OCI-LY7 (cell line): ENCODE measurements at regions of chr5 and their contacts with region 1.

Region 1: DNA sequence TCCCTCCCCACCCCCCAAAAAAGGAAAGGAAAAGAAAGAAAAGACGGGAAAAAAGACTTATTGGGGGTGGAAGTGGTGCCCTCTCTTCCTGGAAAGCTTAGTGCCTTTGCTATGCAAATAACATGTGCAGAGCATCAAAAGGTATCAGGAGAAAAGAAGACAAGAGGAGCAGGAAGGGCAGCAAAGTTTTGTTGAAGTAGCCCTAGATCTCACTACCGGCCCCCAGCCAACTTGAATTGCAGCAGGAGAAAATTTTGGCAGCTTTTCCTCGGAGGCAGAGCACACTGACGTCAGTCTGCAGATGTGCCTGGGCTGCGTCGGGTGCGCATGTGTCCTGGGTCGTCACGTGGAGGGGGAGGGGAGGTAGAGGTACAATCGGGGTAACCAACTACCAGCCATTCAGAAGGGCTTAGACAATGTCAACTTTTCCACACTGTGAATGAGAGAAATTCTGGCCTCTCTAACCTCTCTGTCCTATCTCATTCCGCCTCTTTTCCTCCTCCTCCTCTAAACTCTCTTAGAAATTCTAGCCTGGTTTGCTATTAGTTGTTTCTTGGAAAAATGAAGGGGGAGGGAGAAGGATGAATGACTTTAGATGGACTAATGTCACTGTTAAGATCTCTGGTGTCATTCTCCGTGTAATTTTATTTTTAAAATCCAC is at the start of gene ADAMTS6:
- DNase-seq: peak; percentile 90
- H3K4me3 ChIP-seq: peak within 1 kb of the TSS; percentile 71
- H3K27ac ChIP-seq: peak within 1 kb of the TSS; percentile 72
- H3K4me1 ChIP-seq: peaks cover 36% of the 10 kb centered on the region
- CTCF ChIP-seq: no peak
- total RNA-seq, gene ADAMTS6: 18.1 and 23.0 TPM in 2 replicates

Region 2: DNA sequence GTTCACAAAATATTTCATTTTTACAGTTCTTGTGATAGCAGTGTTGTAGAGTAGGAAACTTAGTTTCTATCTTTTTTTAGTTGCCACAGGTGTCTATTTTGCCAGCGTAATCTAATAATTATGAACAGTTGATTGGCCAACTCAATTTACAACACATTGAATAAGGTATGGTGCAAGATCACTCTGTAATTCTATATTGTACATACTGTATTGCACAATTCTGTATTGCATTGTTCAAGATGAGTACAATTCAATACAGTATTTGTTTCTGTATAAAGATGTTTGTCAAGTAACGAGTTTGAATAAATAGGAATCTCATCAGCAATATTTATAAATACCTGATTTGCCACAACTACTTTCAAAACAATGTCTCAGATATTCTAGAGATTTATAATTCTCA is 1455.3 kb before region 1 on chr5:
- CTCF ChIA-PET with region 1: no interaction called
- POLR2A ChIA-PET with region 1: no interaction called
- intact Hi-C with region 1: no loop called
- DNase-seq: no peak
- H3K4me3 ChIP-seq: no peak overlapping the region
- H3K27ac ChIP-seq: no peak overlapping the region
- H3K4me1 ChIP-seq: no peaks in the 10 kb centered on the region
- CTCF ChIP-seq: no peak

Region 3: DNA sequence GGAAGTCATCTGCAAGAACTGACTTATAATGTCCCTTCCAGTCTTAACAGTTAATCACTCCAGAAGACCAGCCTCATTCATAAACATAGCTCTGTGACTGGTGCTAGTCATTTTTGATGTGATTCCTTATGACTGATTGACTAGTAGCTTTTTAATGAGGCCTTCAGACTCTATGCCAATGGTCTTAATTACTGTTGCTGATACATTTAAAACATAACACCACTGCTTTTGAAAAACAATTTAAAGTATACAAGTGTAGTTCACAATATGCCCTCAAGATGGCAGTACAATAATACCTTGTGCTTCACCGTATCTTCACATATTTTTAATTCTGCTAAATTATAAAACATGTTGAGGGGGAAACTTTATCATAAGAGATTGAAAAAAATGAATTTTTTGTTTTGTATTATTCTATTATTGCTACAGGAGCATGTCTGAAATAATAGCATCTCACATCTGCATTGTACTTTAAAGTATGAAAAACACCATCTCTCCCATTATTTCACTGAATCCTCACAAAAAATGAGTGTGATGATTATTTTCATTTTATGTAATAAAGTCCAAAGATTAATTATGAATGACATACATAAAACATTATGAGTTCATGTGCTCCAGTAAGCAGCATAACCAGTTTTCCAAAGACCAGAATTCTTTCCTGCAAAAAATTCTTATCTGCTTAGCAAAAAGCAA is 846.6 kb before region 1 on chr5:
- CTCF ChIA-PET with region 1: no interaction called
- POLR2A ChIA-PET with region 1: interaction called, 3 read pairs
- intact Hi-C with region 1: loop called (anchors 2 kb)
- DNase-seq: peak; percentile 47
- H3K4me3 ChIP-seq: no peak overlapping the region
- H3K27ac ChIP-seq: no peak overlapping the region
- H3K4me1 ChIP-seq: no peaks in the 10 kb centered on the region
- CTCF ChIP-seq: peak; percentile 99

Region 4: GRCh38 chr5:64811050-64811640 is 670.6 kb before region 1 on chr5:
- CTCF ChIA-PET with region 1: no interaction called
- POLR2A ChIA-PET with region 1: interaction called, 9 read pairs
- intact Hi-C with region 1: loop called (anchors 1 kb)
- DNase-seq: peak; percentile 65
- H3K4me3 ChIP-seq: no peak overlapping the region
- H3K27ac ChIP-seq: no peak overlapping the region
- H3K4me1 ChIP-seq: no peaks in the 10 kb centered on the region
- CTCF ChIP-seq: peak; percentile 92

Region 5: GRCh38 chr5:64971513-64971912 is 510.3 kb before region 1 on chr5:
- CTCF ChIA-PET with region 1: no interaction called
- POLR2A ChIA-PET with region 1: no interaction called
- intact Hi-C with region 1: loop called (anchors 5 kb)
- DNase-seq: peak; percentile 54
- H3K4me3 ChIP-seq: no peak overlapping the region
- H3K27ac ChIP-seq: no peak overlapping the region
- H3K4me1 ChIP-seq: peaks cover 5% of the 10 kb centered on the region
- CTCF ChIP-seq: peak; percentile 75

Region 6: DNA sequence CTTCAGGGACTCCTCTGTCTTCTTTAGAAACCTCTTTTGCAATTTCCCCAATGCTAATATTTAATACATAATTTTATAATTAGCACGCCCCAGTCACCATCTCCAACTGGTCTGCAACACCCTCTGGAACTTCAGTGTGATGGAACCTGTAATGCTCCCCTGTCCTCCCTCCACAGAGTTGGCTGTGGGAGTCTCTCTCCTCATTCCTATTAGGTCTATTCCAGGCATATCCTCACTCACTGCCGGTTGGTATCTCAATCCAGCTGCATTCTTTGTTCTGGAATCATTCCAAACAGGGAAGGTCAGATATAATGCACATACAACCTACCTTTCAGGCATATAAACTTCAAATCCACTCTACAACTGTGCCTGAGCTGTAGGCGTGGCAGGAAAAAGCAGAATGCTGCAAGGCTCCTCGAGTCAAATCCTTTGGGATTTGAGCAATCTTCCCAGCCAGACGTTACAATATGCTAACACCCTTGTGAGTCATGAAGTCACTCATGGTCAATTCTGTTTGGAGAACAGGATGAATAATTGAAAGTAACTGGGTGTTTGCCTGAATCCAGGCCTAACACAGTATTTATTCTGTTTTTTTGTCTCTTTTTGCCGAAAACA is 419.2 kb before region 1 on chr5:
- CTCF ChIA-PET with region 1: interaction called, 3 read pairs
- POLR2A ChIA-PET with region 1: interaction called, 5 read pairs
- intact Hi-C with region 1: loop called (anchors 5 kb)
- DNase-seq: no peak
- H3K4me3 ChIP-seq: peak overlapping the region; percentile 35
- H3K27ac ChIP-seq: peak overlapping the region; percentile 93
- H3K4me1 ChIP-seq: peaks cover 98% of the 10 kb centered on the region
- CTCF ChIP-seq: no peak

Region 7: GRCh38 chr5:65102828-65103711 is 378.7 kb before region 1 on chr5:
- CTCF ChIA-PET with region 1: no interaction called
- POLR2A ChIA-PET with region 1: interaction called, 7 read pairs
- intact Hi-C with region 1: loop called (anchors 2 kb)
- DNase-seq: peak; percentile 82
- H3K4me3 ChIP-seq: peak overlapping the region; percentile 70
- H3K27ac ChIP-seq: no peak overlapping the region
- H3K4me1 ChIP-seq: peaks cover 39% of the 10 kb centered on the region
- CTCF ChIP-seq: peak; percentile 74